CD8-positive, alpha-beta T cell (primary cell): ENCODE measurements at regions of chr18 and their contacts with region 1.

Region 1: DNA sequence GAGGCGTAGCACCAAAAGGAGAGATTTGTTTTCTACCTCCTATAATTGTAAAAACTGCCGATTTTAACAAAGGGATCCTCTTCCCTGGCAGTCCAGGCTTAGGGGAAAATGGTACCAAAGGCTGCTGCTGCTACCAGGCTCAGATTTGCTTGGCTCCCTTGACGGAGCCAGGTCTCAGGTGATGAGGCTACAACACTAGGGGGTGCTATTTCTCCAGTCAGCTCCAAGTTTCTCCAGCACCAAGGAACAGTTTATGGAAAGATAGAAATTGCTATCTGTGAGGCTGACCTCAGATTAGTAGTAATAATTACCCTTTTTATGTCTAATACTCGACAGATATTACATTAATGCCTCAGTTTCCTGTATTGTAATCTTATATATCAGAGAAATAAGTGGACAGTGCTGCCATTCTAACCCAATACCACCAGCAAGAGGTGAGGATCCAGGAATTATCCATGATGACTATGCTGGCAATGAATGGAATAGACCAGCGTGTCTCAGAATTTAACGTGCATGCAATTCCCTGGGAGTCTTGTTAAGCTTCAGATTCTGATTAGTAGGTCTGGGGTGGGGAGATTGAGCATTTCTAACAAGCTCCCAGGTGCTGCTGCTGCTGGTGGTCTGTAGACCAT is 111.3 kb downstream of the ESCO1 start:
- DNase-seq: peak in 3 of 9 experiments; percentile 11 to 55 (median 47)
- ATAC-seq: no peak
- H3K4me3 ChIP-seq: no peak overlapping the region
- H3K4me3 Mint-ChIP-seq: no peak overlapping the region
- H3K27ac ChIP-seq: no peak overlapping the region
- H3K27ac Mint-ChIP-seq: no peak overlapping the region
- H3K4me1 ChIP-seq: no peaks in the 10 kb centered on the region
- H3K4me1 Mint-ChIP-seq: no peaks in the 10 kb centered on the region
- H3K27me3 ChIP-seq: no peaks in the 10 kb centered on the region
- H3K27me3 Mint-ChIP-seq: peaks cover 4% of the 10 kb centered on the region
- CTCF ChIP-seq: peak; percentile 29

Region 2: DNA sequence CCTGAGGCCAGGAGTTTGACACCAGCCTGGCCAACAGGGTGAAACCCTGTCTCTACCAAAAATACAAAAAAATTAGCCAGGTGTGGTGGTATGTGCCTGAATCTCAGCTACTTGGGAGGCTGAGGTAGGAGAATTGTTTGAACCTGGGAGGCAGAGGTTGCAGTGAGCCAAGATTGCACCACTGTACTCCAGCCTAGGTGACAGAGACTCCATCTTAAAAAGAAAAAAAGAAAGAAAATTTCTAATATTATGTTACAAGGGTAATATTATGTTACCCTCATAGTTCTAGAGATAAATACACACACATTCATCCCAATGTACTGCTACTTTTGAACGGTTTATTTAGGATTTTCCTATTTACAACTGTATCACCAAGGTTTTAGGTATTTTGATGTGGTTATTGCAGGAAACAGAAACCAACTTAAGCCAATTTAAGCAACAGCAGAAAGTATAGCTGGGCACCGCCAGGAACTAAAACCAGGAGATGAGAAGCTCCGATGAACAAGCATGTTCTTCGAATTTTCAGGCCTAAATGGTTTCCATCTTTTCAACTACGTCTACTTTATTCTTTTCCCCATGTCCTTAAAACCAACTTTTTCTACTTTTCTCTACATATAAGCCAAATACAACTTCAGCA is 365.8 kb before region 1 on chr18:
- CTCF ChIA-PET with region 1: no interaction called
- POLR2A ChIA-PET with region 1: no interaction called
- intact Hi-C with region 1: no loop called
- DNase-seq: peak in 1 of 9 experiments; percentile 20
- ATAC-seq: no peak
- H3K4me3 ChIP-seq: no peak overlapping the region
- H3K4me3 Mint-ChIP-seq: peak overlapping the region; percentile 27
- H3K27ac ChIP-seq: no peak overlapping the region
- H3K27ac Mint-ChIP-seq: peak overlapping the region; percentile 19
- H3K4me1 ChIP-seq: peaks cover 5% of the 10 kb centered on the region
- H3K4me1 Mint-ChIP-seq: peaks cover 7% of the 10 kb centered on the region
- H3K27me3 ChIP-seq: no peaks in the 10 kb centered on the region
- H3K27me3 Mint-ChIP-seq: peaks cover 4% of the 10 kb centered on the region
- CTCF ChIP-seq: no peak

Region 3: DNA sequence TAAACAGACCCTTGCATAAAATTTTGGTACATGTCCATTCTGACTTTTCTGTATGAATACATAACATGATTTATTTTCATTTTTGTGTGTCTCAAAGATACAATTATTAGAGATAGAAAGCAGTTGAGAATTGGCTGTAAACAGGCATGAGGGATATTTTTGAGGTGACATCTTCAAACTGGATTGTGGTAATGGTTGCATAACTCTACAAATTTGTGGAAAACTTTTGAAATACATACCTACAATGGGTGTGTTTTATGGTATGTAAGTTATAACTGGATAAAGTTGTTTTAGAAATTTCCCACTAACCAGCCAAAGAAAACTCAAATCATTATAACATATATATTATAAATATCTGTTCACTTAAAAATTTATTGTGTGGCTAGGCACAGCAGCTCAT is 207.6 kb before region 1 on chr18:
- CTCF ChIA-PET with region 1: no interaction called
- POLR2A ChIA-PET with region 1: no interaction called
- intact Hi-C with region 1: no loop called
- DNase-seq: no peak
- ATAC-seq: no peak
- H3K4me3 ChIP-seq: no peak overlapping the region
- H3K4me3 Mint-ChIP-seq: no peak overlapping the region
- H3K27ac ChIP-seq: no peak overlapping the region
- H3K27ac Mint-ChIP-seq: no peak overlapping the region
- H3K4me1 ChIP-seq: no peaks in the 10 kb centered on the region
- H3K4me1 Mint-ChIP-seq: no peaks in the 10 kb centered on the region
- H3K27me3 ChIP-seq: no peaks in the 10 kb centered on the region
- H3K27me3 Mint-ChIP-seq: peaks cover 2% of the 10 kb centered on the region
- CTCF ChIP-seq: no peak

Region 4: GRCh38 chr18:21851327-21851972 is 362.2 kb after region 1 on chr18:
- CTCF ChIA-PET with region 1: interaction called, 6 read pairs
- POLR2A ChIA-PET with region 1: no interaction called
- intact Hi-C with region 1: loop called in 1 of 2 experiments (anchors 10 kb)
- DNase-seq: peak in 2 of 9 experiments; percentile 4 to 25
- ATAC-seq: no peak
- H3K4me3 ChIP-seq: no peak overlapping the region
- H3K4me3 Mint-ChIP-seq: no peak overlapping the region
- H3K27ac ChIP-seq: no peak overlapping the region
- H3K27ac Mint-ChIP-seq: no peak overlapping the region
- H3K4me1 ChIP-seq: no peaks in the 10 kb centered on the region
- H3K4me1 Mint-ChIP-seq: peaks cover 7% of the 10 kb centered on the region
- H3K27me3 ChIP-seq: no peaks in the 10 kb centered on the region
- H3K27me3 Mint-ChIP-seq: no peaks in the 10 kb centered on the region
- CTCF ChIP-seq: peak; percentile 50

Region 5: DNA sequence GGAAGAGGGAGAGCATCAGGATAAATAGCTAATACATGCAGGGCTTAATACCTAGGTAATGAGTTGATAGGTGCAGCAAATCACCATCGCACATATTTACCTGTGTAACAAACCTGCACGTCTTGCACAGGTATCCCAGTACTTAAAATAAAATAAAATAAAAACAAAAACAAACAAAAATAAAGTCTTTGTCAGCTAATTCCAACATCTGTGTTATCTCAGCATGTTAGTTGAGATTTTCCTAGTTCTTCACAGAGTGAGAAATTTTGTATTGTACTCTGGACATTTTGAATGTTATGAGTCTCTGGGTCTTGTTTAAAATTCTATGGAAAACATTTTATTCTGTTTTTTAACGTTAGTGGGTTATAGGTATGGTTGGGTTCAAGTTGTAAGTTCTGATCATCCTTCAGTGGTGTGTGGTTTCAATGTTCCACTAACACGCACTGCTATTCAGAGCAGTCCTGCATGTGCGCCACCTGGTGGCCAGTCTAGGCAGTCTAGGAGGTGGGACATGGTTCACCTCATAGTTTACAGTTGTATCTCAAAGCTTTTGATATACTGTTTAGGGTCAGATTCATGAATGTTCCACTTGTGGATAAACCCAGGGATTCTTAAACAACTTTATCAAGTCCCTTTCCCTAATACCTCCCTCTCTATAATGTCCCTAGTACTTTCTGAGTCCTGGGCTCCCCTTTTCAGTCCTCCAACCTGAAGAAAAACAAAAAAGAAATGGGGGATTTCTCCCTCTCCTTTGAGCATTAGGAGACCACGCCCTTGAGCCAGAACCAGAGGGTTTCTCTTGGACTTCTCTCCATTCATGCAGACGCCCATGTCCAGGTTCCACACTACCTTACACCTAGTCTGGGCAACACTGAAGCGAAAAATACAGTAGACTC is 466.8 kb after region 1 on chr18:
- CTCF ChIA-PET with region 1: interaction called, 14 read pairs
- POLR2A ChIA-PET with region 1: no interaction called
- intact Hi-C with region 1: loop called in 1 of 2 experiments (anchors 1 kb)
- DNase-seq: peak; percentile 51 to 87 (median 76)
- ATAC-seq: peak; percentile 78
- H3K4me3 ChIP-seq: no peak overlapping the region
- H3K4me3 Mint-ChIP-seq: no peak overlapping the region
- H3K27ac ChIP-seq: no peak overlapping the region
- H3K27ac Mint-ChIP-seq: no peak overlapping the region
- H3K4me1 ChIP-seq: no peaks in the 10 kb centered on the region
- H3K4me1 Mint-ChIP-seq: no peaks in the 10 kb centered on the region
- H3K27me3 ChIP-seq: no peaks in the 10 kb centered on the region
- H3K27me3 Mint-ChIP-seq: peaks cover 20% of the 10 kb centered on the region
- CTCF ChIP-seq: peak; percentile 91